ENCODE measurements at regions of chr15 and their contacts with region 1.

Region 1: DNA sequence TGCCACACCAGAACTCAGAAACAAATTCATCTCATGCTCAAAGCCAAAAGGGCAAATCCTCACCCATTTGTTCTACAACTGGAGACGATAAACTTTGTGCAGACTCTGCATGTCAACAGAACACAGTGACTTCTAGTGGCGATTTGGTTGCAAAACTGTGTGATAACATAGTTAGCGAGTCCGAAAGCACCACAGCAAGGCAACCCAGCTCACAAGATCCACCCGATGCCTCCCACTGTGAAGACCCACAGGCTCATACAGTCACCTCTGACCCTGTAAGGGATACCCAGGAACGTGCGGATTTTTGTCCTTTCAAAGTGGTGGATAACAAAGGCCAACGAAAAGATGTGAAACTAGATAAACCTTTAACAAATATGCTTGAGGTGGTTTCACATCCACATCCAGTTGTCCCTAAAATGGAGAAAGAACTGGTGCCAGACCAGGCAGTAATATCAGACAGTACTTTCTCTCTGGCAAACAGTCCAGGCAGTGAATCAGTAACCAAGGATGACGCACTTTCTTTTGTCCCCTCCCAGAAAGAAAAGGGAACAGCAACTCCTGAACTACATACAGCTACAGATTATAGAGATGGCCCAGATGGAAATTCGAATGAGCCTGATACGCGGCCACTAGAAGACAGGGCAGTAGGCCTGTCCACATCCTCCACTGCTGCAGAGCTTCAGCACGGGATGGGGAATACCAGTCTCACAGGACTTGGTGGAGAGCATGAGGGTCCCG is 199.7 kb downstream of the AKAP13 start:
- DNase-seq: peak; percentile 48
- ATAC-seq: peak; percentile 12 to 64

Region 2: DNA sequence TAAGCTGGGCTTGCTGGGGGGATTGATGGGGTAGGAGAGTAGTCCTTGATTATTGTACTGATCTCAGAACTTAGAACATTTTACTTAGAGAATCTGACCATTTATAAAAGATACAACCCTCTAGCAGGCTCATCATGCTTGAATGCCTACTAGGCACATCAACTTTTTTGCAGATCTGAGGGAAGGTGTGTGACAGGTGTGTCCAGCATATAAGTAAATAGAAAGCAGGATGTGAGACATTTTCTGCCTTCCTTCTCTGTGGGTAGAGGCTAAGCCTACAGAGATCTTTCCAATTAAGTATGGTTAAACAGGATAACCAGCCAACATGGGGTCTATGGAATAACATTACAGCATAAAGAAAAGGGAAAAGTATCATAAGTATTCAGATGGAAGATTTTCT is 40.6 kb before region 1 on chr15:
- intact Hi-C with region 1: loop called in 1 of 2 experiments (anchors 5 kb)
- DNase-seq: no peak
- ATAC-seq: no peak

Measured in left cardiac atrium (tissue), 4 donors.